Naive thymus-derived CD4-positive, alpha-beta T cell (primary cell): ENCODE measurements at regions of chr3 and their contacts with region 1.

Region 1: GRCh38 chr3:120742198-120742849 is at the starts of genes GTF2E1 and RABL3:
- DNase-seq: peak; percentile 86 to 98 (median 97)
- ATAC-seq: peak; percentile 97
- H3K4me3 ChIP-seq: peak within 1 kb of the TSS; percentile 81
- H3K4me3 Mint-ChIP-seq: peak within 1 kb of the TSS; percentile 84 to 97 (median 92)
- H3K27ac ChIP-seq: peak within 1 kb of the TSS; percentile 98
- H3K27ac Mint-ChIP-seq: peak within 1 kb of the TSS; percentile 93 to 99 (median 97)
- H3K4me1 ChIP-seq: peaks cover 16 to 23% of the 10 kb centered on the region in 2 donors
- H3K4me1 Mint-ChIP-seq: peaks cover 26 to 55% (median 47%) of the 10 kb centered on the region in 7 donors
- H3K27me3 ChIP-seq: no peaks in the 10 kb centered on the region
- H3K27me3 Mint-ChIP-seq: no peaks in the 10 kb centered on the region
- total RNA-seq, gene GTF2E1: 8.4 to 27.3 (median 25.3) TPM
- total RNA-seq, gene RABL3: 15.4 to 30.3 (median 23.0) TPM

Region 2: GRCh38 chr3:119293871-119294695 is 1448.2 kb before region 1 on chr3 and contains the start of gene ARHGAP31:
- CTCF ChIA-PET with region 1: no interaction called
- POLR2A ChIA-PET with region 1: no interaction called
- intact Hi-C with region 1: loop called in 1 of 2 experiments (anchors 5 kb)
- DNase-seq: peak; percentile 70 to 91 (median 86)
- ATAC-seq: peak; percentile 77
- H3K4me3 ChIP-seq: peak within 1 kb of the TSS; percentile 50
- H3K4me3 Mint-ChIP-seq: peak within 1 kb of the TSS; percentile 68 to 95 (median 90)
- H3K27ac ChIP-seq: peak within 1 kb of the TSS; percentile 91
- H3K27ac Mint-ChIP-seq: peak within 1 kb of the TSS; percentile 71 to 99 (median 92)
- H3K4me1 ChIP-seq: peaks cover 22 to 26% of the 10 kb centered on the region in 2 donors
- H3K4me1 Mint-ChIP-seq: peaks cover 26 to 74% (median 63%) of the 10 kb centered on the region in 7 donors
- H3K27me3 ChIP-seq: no peaks in the 10 kb centered on the region
- H3K27me3 Mint-ChIP-seq: peaks cover 0 to 43% (median 0%) of the 10 kb centered on the region in 5 donors
- total RNA-seq, gene ARHGAP31: 3.0 to 11.9 (median 3.1) TPM

Region 3: DNA sequence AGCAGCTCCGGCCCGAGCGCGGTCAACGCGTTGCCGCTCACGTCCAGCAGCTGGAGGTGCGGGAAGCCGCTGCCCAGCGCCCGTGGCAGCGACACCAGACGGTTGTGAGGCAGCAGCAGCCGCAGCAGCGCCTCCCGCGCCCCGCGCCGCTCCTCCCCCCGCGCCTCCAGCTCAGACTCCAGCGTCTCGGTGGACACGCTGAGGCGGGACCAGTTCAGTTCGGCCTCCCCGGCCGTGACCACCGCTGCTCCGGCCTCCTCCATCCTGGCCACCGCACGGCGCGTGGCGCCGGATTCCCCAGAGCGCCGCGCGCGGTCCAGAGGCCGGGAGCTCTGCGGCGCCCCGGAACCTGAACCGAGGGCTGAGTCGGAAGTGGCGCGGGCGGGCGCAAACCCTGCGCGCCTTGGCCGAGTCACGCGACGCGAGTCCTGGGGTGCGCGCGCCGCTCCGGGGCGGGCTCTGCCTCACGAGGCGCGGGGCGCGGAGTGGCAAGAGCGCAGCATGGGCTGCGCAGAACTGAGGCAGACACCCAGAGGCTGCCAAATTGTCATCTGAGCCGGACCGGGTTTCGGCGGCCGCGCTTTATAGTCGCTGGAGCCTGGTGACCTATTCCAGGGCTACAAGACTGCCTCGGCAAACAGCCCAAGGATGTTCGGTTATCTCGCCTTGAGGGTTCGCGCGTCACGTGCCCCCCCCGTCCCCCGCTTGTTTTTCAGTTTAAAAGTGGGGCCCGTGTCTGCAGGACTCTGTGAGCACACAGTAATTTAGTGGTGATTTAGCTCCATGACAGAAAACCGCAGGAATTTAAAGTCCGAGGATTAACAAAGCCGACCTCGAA is 393.1 kb before region 1 on chr3 and contains the start of gene LRRC58:
- CTCF ChIA-PET with region 1: no interaction called
- POLR2A ChIA-PET with region 1: interaction called, 11 read pairs
- intact Hi-C with region 1: loop called (anchors 1 kb)
- DNase-seq: peak; percentile 85 to 95 (median 94)
- ATAC-seq: peak; percentile 95
- H3K4me3 ChIP-seq: peak within 1 kb of the TSS; percentile 91
- H3K4me3 Mint-ChIP-seq: peak within 1 kb of the TSS; percentile 85 to 96 (median 94)
- H3K27ac ChIP-seq: peak within 1 kb of the TSS; percentile 76
- H3K27ac Mint-ChIP-seq: peak within 1 kb of the TSS; percentile 87 to 97 (median 93)
- H3K4me1 ChIP-seq: peaks cover 20 to 26% of the 10 kb centered on the region in 2 donors
- H3K4me1 Mint-ChIP-seq: peaks cover 39 to 54% (median 48%) of the 10 kb centered on the region in 7 donors
- H3K27me3 ChIP-seq: no peaks in the 10 kb centered on the region
- H3K27me3 Mint-ChIP-seq: peaks cover 0 to 29% (median 0%) of the 10 kb centered on the region in 5 donors
- total RNA-seq, gene LRRC58: 12.3 to 24.1 (median 20.8) TPM

Region 4: GRCh38 chr3:120596116-120596852 is 146.0 kb before region 1 on chr3 and contains the start of gene NDUFB4:
- CTCF ChIA-PET with region 1: interaction called, 5 read pairs
- POLR2A ChIA-PET with region 1: interaction called, 45 read pairs
- intact Hi-C with region 1: loop called (anchors 1 kb)
- DNase-seq: peak; percentile 84 to 97 (median 93)
- ATAC-seq: peak; percentile 97
- H3K4me3 ChIP-seq: peak within 1 kb of the TSS; percentile 99
- H3K4me3 Mint-ChIP-seq: peak within 1 kb of the TSS in 8 of 10 donors; percentile 85 to 99 (median 96)
- H3K27ac ChIP-seq: peak within 1 kb of the TSS; percentile 92
- H3K27ac Mint-ChIP-seq: peak within 1 kb of the TSS in 5 of 9 donors; percentile 94 to 99 (median 98)
- H3K4me1 ChIP-seq: peaks cover 25 to 27% of the 10 kb centered on the region in 2 donors
- H3K4me1 Mint-ChIP-seq: peaks cover 0 to 20% (median 11%) of the 10 kb centered on the region in 7 donors
- H3K27me3 ChIP-seq: no peaks in the 10 kb centered on the region
- H3K27me3 Mint-ChIP-seq: peaks cover 0 to 20% (median 0%) of the 10 kb centered on the region in 5 donors
- total RNA-seq, gene NDUFB4: 63.4 to 126 (median 76.2) TPM

Region 5: DNA sequence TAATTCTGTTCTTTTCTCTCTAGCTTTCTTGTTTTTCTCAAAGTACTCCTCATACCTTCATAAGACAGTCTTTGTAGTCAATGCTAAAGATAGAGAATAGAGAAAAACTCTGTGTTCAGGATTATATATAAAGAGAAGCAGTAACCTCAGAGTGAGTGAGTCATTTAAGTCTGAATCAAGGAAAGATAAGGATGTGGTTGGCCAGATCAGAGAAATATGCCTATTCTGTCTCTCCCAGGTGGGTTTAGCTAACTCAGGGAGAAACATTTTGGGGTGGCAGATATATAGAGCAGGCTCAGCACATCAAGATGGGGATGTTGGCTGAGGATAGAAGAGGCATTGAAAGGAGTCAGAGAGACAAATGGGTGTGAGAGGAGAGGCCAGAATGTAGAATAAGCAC is 31.6 kb after region 1 on chr3:
- CTCF ChIA-PET with region 1: interaction called, 3 read pairs
- POLR2A ChIA-PET with region 1: no interaction called
- intact Hi-C with region 1: loop called in 1 of 2 experiments (anchors 1 kb)
- DNase-seq: no peak
- ATAC-seq: no peak
- H3K4me3 ChIP-seq: no peak overlapping the region
- H3K4me3 Mint-ChIP-seq: no peak overlapping the region
- H3K27ac ChIP-seq: no peak overlapping the region
- H3K27ac Mint-ChIP-seq: no peak overlapping the region
- H3K4me1 ChIP-seq: no peaks in the 10 kb centered on the region
- H3K4me1 Mint-ChIP-seq: peaks cover 7 to 23% (median 16%) of the 10 kb centered on the region in 7 donors
- H3K27me3 ChIP-seq: no peaks in the 10 kb centered on the region
- H3K27me3 Mint-ChIP-seq: no peaks in the 10 kb centered on the region

Region 6: GRCh38 chr3:121735047-121735696 is 992.8 kb after region 1 on chr3:
- CTCF ChIA-PET with region 1: no interaction called
- POLR2A ChIA-PET with region 1: no interaction called
- intact Hi-C with region 1: no loop called
- DNase-seq: no peak
- ATAC-seq: no peak
- H3K4me3 ChIP-seq: no peak overlapping the region
- H3K4me3 Mint-ChIP-seq: no peak overlapping the region
- H3K27ac ChIP-seq: no peak overlapping the region
- H3K27ac Mint-ChIP-seq: no peak overlapping the region
- H3K4me1 ChIP-seq: no peaks in the 10 kb centered on the region
- H3K4me1 Mint-ChIP-seq: peaks cover 21 to 63% (median 52%) of the 10 kb centered on the region in 7 donors
- H3K27me3 ChIP-seq: no peaks in the 10 kb centered on the region
- H3K27me3 Mint-ChIP-seq: no peaks in the 10 kb centered on the region

Region 7: GRCh38 chr3:121749276-121750086 is 1007.2 kb after region 1 on chr3 and contains the start of gene GOLGB1:
- CTCF ChIA-PET with region 1: no interaction called
- POLR2A ChIA-PET with region 1: no interaction called
- intact Hi-C with region 1: loop called in 1 of 2 experiments (anchors 2 kb)
- DNase-seq: peak; percentile 79 to 98 (median 96)
- ATAC-seq: peak; percentile 96
- H3K4me3 ChIP-seq: peak within 1 kb of the TSS; percentile 78
- H3K4me3 Mint-ChIP-seq: peak within 1 kb of the TSS in 3 of 10 donors; percentile 5 to 58 (median 39)
- H3K27ac ChIP-seq: peak within 1 kb of the TSS; percentile 96
- H3K27ac Mint-ChIP-seq: peak within 1 kb of the TSS in 2 of 9 donors; percentile 19 to 36
- H3K4me1 ChIP-seq: peaks cover 4 to 11% of the 10 kb centered on the region in 2 donors
- H3K4me1 Mint-ChIP-seq: peaks cover 5 to 18% (median 10%) of the 10 kb centered on the region in 7 donors
- H3K27me3 ChIP-seq: no peaks in the 10 kb centered on the region
- H3K27me3 Mint-ChIP-seq: peaks cover 0 to 24% (median 14%) of the 10 kb centered on the region in 5 donors
- total RNA-seq, gene GOLGB1: 29.5 to 49.7 (median 44.5) TPM

Region 8: DNA sequence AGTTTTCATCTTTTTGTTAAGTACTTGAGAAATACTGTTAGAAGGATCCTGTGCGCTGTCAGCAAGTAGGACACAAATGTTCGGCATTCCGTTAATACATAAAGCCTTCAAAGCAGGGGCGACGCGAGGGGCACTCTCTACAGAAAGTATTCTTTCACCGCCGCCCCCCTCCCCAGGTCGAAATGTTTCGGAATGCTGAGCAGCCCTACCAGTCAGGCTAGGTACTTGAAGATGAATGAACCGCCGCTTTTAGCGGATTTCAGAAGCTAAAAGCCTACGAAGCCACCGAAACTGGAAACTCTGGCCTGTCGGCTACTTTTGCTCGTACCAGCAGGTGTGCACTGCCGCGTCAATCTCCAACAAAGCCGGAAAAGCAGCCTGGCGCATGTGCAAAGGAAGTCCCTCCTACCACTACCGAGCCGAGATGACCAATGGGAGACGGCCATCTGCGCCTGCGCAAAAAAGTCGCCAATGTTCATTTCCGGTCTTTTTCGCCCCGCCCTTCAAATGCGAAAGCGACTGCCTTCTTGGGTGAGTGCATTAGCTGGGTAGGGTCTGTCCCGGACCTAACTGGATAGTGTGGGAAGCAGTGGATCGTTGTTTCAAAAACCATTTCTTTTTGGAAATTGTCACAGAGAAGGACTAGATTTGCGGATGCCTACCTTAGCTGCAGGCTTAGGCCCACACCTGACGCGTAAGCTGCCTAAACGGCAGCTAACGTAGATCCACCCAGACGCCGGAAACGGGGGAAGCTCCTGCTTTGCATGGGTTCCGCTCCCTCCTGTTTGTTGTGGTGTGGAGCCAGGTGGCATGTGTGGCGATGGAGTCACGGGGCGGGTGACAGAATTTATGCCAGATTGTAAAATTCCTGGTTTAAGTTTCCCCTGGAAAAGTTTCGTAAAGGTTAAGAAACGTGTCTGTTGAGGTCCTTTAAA is 1673.7 kb after region 1 on chr3 and contains the start of gene WDR5B:
- CTCF ChIA-PET with region 1: no interaction called
- POLR2A ChIA-PET with region 1: no interaction called
- intact Hi-C with region 1: loop called in 1 of 2 experiments (anchors 5 kb)
- DNase-seq: peak; percentile 95 to 99 (median 99)
- ATAC-seq: peak; percentile 94
- H3K4me3 ChIP-seq: peak within 1 kb of the TSS; percentile 96
- H3K4me3 Mint-ChIP-seq: peak within 1 kb of the TSS; percentile 92 to 99 (median 97)
- H3K27ac ChIP-seq: peak within 1 kb of the TSS; percentile 93
- H3K27ac Mint-ChIP-seq: peak within 1 kb of the TSS; percentile 98 to 100 (median 100)
- H3K4me1 ChIP-seq: peaks cover 19 to 24% of the 10 kb centered on the region in 2 donors
- H3K4me1 Mint-ChIP-seq: peaks cover 24 to 72% (median 65%) of the 10 kb centered on the region in 7 donors
- H3K27me3 ChIP-seq: no peaks in the 10 kb centered on the region
- H3K27me3 Mint-ChIP-seq: peaks cover 0 to 3% (median 0%) of the 10 kb centered on the region in 5 donors
- total RNA-seq, gene WDR5B: 4.8 to 19.4 (median 6.4) TPM